Activated CD4-positive, alpha-beta memory T cell treated with anti-CD3 and anti-CD28 coated beads for 36 hours (primary cell): ENCODE measurements at regions of chr2 and their contacts with region 1.

Region 1: GRCh38 chr2:162221064-162221463 is 22.2 kb downstream of the FAP start:
- DNase-seq: peak; percentile 74
- H3K4me3 Mint-ChIP-seq: no peak overlapping the region
- H3K27ac Mint-ChIP-seq: no peak overlapping the region
- H3K4me1 Mint-ChIP-seq: no peaks in the 10 kb centered on the region
- H3K27me3 Mint-ChIP-seq: peaks cover 6% of the 10 kb centered on the region

Region 2: GRCh38 chr2:162153608-162154224 is 67.3 kb before region 1 on chr2:
- CTCF ChIA-PET with region 1: interaction called, 55 read pairs
- POLR2A ChIA-PET with region 1: no interaction called
- intact Hi-C with region 1: loop called (anchors 1 kb)
- DNase-seq: peak; percentile 70
- H3K4me3 Mint-ChIP-seq: no peak overlapping the region
- H3K27ac Mint-ChIP-seq: no peak overlapping the region
- H3K4me1 Mint-ChIP-seq: peaks cover 4% of the 10 kb centered on the region
- H3K27me3 Mint-ChIP-seq: peaks cover 17% of the 10 kb centered on the region

Region 3: GRCh38 chr2:162196638-162197037 is 24.4 kb before region 1 on chr2:
- CTCF ChIA-PET with region 1: interaction called, 23 read pairs
- POLR2A ChIA-PET with region 1: no interaction called
- intact Hi-C with region 1: no loop called
- DNase-seq: no peak
- H3K4me3 Mint-ChIP-seq: no peak overlapping the region
- H3K27ac Mint-ChIP-seq: no peak overlapping the region
- H3K4me1 Mint-ChIP-seq: peaks cover 10% of the 10 kb centered on the region
- H3K27me3 Mint-ChIP-seq: peaks cover 29% of the 10 kb centered on the region

Region 4: GRCh38 chr2:162293122-162293786 is 72.2 kb after region 1 on chr2:
- CTCF ChIA-PET with region 1: interaction called, 321 read pairs
- POLR2A ChIA-PET with region 1: no interaction called
- intact Hi-C with region 1: loop called (anchors 1 kb)
- DNase-seq: no peak
- H3K4me3 Mint-ChIP-seq: no peak overlapping the region
- H3K27ac Mint-ChIP-seq: no peak overlapping the region
- H3K4me1 Mint-ChIP-seq: no peaks in the 10 kb centered on the region
- H3K27me3 Mint-ChIP-seq: no peaks in the 10 kb centered on the region

Region 5: GRCh38 chr2:162591403-162592083 is 370.5 kb after region 1 on chr2:
- CTCF ChIA-PET with region 1: no interaction called
- POLR2A ChIA-PET with region 1: no interaction called
- intact Hi-C with region 1: loop called (anchors 10 kb)
- DNase-seq: no peak
- H3K4me3 Mint-ChIP-seq: no peak overlapping the region
- H3K27ac Mint-ChIP-seq: no peak overlapping the region
- H3K4me1 Mint-ChIP-seq: no peaks in the 10 kb centered on the region
- H3K27me3 Mint-ChIP-seq: no peaks in the 10 kb centered on the region